ENCODE measurements at regions of chr11 and their contacts with region 1.

Region 1: GRCh38 chr11:74929431-74930363 is 19.2 kb downstream of the XRRA1 start:
- DNase-seq: peak; percentile 89
- ATAC-seq: peak; percentile 96
- H3K4me3 ChIP-seq: no peak overlapping the region
- H3K27ac ChIP-seq: no peak overlapping the region
- H3K4me1 ChIP-seq: peaks cover 12% of the 10 kb centered on the region
- H3K27me3 ChIP-seq: no peaks in the 10 kb centered on the region
- CTCF ChIP-seq: peak; percentile 86
- EP300 ChIP-seq: no peak
- POLR2A ChIP-seq: no peak
- RAD21 ChIP-seq: peak; percentile 63; the same call in 1 of the 2 replicates

Region 2: GRCh38 chr11:74532501-74533246 is 397.0 kb before region 1 on chr11:
- CTCF ChIA-PET with region 1: no interaction called
- POLR2A ChIA-PET with region 1: no interaction called
- in situ Hi-C with region 1: no loop called
- intact Hi-C with region 1: no loop called
- DNase-seq: no peak
- ATAC-seq: no peak
- H3K4me3 ChIP-seq: no peak overlapping the region
- H3K27ac ChIP-seq: no peak overlapping the region
- H3K4me1 ChIP-seq: no peaks in the 10 kb centered on the region
- H3K27me3 ChIP-seq: peaks cover 0 to 6% of the 10 kb centered on the region in 2 experiments; a peak in 2 of 5 replicates
- CTCF ChIP-seq: no peak
- EP300 ChIP-seq: no peak
- POLR2A ChIP-seq: no peak
- RAD21 ChIP-seq: no peak

Region 3: GRCh38 chr11:75022759-75023396 is 93.2 kb after region 1 on chr11:
- CTCF ChIA-PET with region 1: interaction called, 5 read pairs
- POLR2A ChIA-PET with region 1: no interaction called
- in situ Hi-C with region 1: loop called (anchors 5 kb)
- intact Hi-C with region 1: no loop called
- DNase-seq: peak; percentile 73
- ATAC-seq: peak; percentile 98
- H3K4me3 ChIP-seq: no peak overlapping the region
- H3K27ac ChIP-seq: no peak overlapping the region
- H3K4me1 ChIP-seq: peaks cover 5% of the 10 kb centered on the region; the same call in 1 of the 2 replicates
- H3K27me3 ChIP-seq: peaks cover 0 to 8% of the 10 kb centered on the region in 2 experiments; a peak in 2 of 5 replicates
- CTCF ChIP-seq: peak; percentile 93
- EP300 ChIP-seq: no peak
- POLR2A ChIP-seq: no peak
- RAD21 ChIP-seq: peak; percentile 84

Region 4: GRCh38 chr11:75031771-75032549 is 102.3 kb after region 1 on chr11:
- CTCF ChIA-PET with region 1: interaction called, 39 read pairs
- POLR2A ChIA-PET with region 1: no interaction called
- in situ Hi-C with region 1: no loop called
- intact Hi-C with region 1: loop called (anchors 1 kb)
- DNase-seq: peak; percentile 65
- ATAC-seq: peak; percentile 95
- H3K4me3 ChIP-seq: no peak overlapping the region
- H3K27ac ChIP-seq: no peak overlapping the region
- H3K4me1 ChIP-seq: peaks cover 18% of the 10 kb centered on the region
- H3K27me3 ChIP-seq: peaks cover 0 to 2% of the 10 kb centered on the region in 2 experiments; a peak in 2 of 5 replicates
- CTCF ChIP-seq: peak; percentile 93
- EP300 ChIP-seq: no peak
- POLR2A ChIP-seq: no peak
- RAD21 ChIP-seq: peak; percentile 79

Region 5: GRCh38 chr11:75241036-75241905 is 311.6 kb after region 1 on chr11:
- CTCF ChIA-PET with region 1: no interaction called
- POLR2A ChIA-PET with region 1: no interaction called
- in situ Hi-C with region 1: loop called (anchors 10 kb)
- intact Hi-C with region 1: no loop called
- DNase-seq: peak; percentile 57
- ATAC-seq: peak; percentile 86
- H3K4me3 ChIP-seq: peak overlapping the region; percentile 46 to 74 (median 46); a peak in 5 of 6 replicates
- H3K27ac ChIP-seq: no peak overlapping the region
- H3K4me1 ChIP-seq: peaks cover 15% of the 10 kb centered on the region; the same call in 1 of the 2 replicates
- H3K27me3 ChIP-seq: peaks cover 15 to 63% of the 10 kb centered on the region in 2 experiments
- CTCF ChIP-seq: peak; percentile 76
- EP300 ChIP-seq: no peak
- POLR2A ChIP-seq: no peak
- RAD21 ChIP-seq: peak; percentile 97

Region 6: DNA sequence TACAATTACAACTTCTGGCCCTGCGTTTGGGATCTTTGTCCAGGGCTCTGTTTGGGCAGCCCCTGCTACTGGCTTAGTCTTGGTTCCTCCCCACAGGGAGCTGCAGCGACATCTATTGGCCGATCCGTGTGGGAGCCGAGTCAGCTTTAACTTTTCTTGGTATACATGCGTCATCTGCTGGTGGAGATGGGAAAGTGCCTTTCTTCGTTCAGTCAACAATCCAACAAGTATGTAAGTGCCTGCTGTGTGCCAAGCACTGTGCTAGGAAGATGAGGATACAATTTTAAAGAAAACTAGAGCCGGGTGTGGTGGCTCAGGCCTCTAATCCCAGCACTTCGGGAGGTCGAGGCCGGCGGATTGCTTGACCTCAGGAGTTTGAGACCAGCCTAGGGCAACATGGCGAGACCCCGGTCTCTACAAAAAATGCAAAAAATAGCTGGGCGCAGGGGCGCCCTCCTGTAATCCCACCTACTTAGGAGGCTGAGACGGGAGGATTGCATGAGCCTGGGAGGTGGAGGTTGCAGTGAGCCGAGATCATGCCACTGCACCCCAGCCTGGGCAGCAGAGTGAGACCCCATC is 319.1 kb after region 1 on chr11:
- CTCF ChIA-PET with region 1: interaction called, 31 read pairs
- POLR2A ChIA-PET with region 1: no interaction called
- in situ Hi-C with region 1: loop called (anchors 10 kb)
- intact Hi-C with region 1: loop called (anchors 1 kb)
- DNase-seq: peak; percentile 81
- ATAC-seq: peak; percentile 85
- H3K4me3 ChIP-seq: no peak overlapping the region; a peak in 1 of 6 replicates
- H3K27ac ChIP-seq: no peak overlapping the region
- H3K4me1 ChIP-seq: peaks cover 5% of the 10 kb centered on the region; the same call in 1 of the 2 replicates
- H3K27me3 ChIP-seq: peaks cover 2 to 26% of the 10 kb centered on the region in 2 experiments; a peak in 4 of 5 replicates
- CTCF ChIP-seq: peak; percentile 99
- EP300 ChIP-seq: no peak
- POLR2A ChIP-seq: no peak
- RAD21 ChIP-seq: peak; percentile 95

Measured in HepG2 (cell line).